ENCODE measurements at regions of chr13 and their contacts with region 1.

Region 1: GRCh38 chr13:84896128-84896527 is 903.1 kb downstream of the SLITRK6 start:
- DNase-seq: peak in 3 of 9 experiments; percentile 16 to 53 (median 33)
- ATAC-seq: no peak
- H3K4me3 ChIP-seq: no peak overlapping the region
- H3K4me3 Mint-ChIP-seq: no peak overlapping the region
- H3K27ac ChIP-seq: no peak overlapping the region
- H3K27ac Mint-ChIP-seq: no peak overlapping the region
- H3K4me1 ChIP-seq: no peaks in the 10 kb centered on the region
- H3K4me1 Mint-ChIP-seq: no peaks in the 10 kb centered on the region
- H3K27me3 ChIP-seq: no peaks in the 10 kb centered on the region
- H3K27me3 Mint-ChIP-seq: no peaks in the 10 kb centered on the region
- CTCF ChIP-seq: peak; percentile 55

Region 2: DNA sequence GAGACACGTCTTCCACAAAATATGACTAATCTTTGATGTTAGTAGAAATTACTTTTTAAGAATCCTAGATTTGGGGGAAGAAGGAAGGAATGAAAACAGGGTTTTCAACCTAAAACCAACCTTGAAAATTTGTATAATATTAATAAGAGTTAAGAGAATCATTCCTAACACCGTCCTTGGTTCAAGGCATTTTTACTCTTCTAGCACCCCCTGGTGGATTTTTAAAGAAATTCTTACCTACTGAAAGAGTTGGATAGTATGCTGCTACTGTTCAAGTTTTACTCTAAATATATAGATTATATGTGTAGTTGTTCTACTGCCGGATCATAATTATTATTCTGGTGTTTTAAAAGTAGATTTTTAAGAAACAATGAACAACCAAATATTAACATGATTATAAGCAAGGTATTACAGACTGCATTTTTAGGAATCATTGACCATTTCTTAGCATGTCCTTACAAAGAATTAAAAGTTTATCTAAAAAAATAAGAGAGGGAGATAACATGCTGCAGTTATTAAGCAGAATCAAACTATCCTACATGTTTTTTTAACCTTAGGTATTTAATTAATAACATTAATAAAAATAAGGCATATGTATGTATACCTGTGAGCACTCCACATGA is 910.5 kb after region 1 on chr13:
- CTCF ChIA-PET with region 1: interaction called, 3 read pairs
- POLR2A ChIA-PET with region 1: no interaction called
- intact Hi-C with region 1: loop called in 1 of 2 experiments (anchors 2 kb)
- DNase-seq: peak in 2 of 9 experiments; percentile 14 to 37
- ATAC-seq: peak; percentile 36
- H3K4me3 ChIP-seq: no peak overlapping the region
- H3K4me3 Mint-ChIP-seq: no peak overlapping the region
- H3K27ac ChIP-seq: no peak overlapping the region
- H3K27ac Mint-ChIP-seq: no peak overlapping the region
- H3K4me1 ChIP-seq: no peaks in the 10 kb centered on the region
- H3K4me1 Mint-ChIP-seq: no peaks in the 10 kb centered on the region
- H3K27me3 ChIP-seq: no peaks in the 10 kb centered on the region
- H3K27me3 Mint-ChIP-seq: no peaks in the 10 kb centered on the region
- CTCF ChIP-seq: peak; percentile 60

Measured in CD8-positive, alpha-beta T cell (primary cell).